ENCODE measurements at regions of chr2 and their contacts with region 1.

Region 1: DNA sequence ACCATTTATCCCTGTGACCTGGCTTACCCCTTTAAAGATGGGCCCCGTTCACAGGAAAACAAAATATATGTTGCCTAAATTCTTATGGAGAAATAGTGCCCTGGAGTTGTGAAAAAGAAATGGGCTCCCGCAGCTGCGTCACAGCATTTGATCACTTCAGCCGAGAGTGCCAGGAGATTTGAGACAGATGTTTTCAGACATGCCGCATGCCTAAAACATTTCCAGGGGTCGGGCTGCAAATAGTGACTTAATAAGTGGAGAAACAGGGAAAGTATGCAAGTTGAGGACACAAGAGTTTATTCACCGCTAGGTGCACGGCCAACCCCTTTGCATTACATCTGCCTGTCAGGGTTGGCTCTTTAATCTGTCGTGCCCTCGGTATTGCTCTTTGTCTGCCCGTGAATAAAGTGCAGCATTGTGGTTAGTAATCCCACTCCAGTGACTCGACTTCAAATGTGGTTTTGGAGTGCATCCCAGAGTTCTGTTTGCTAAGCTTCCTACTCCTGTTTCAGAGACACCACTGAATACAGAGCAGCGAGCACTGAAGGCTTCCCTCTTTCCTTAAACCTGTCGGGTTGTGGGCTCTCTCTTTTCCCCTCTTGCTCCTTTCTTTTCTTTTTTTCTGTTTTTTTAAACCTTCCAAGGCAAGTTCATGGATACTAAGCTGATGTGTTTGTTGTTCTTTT is 187.5 kb downstream of the LTBP1 start:
- DNase-seq: peak; percentile 54 to 70 (median 60)
- H3K4me3 ChIP-seq: peak overlapping the region; percentile 26
- H3K27ac ChIP-seq: peak overlapping the region; percentile 33 to 90
- H3K4me1 ChIP-seq: peaks cover 12% of the 10 kb centered on the region
- H3K27me3 ChIP-seq: no peaks in the 10 kb centered on the region
- CTCF ChIP-seq: no peak
- EP300 ChIP-seq: no peak
- POLR2A ChIP-seq: no peak

Region 2: DNA sequence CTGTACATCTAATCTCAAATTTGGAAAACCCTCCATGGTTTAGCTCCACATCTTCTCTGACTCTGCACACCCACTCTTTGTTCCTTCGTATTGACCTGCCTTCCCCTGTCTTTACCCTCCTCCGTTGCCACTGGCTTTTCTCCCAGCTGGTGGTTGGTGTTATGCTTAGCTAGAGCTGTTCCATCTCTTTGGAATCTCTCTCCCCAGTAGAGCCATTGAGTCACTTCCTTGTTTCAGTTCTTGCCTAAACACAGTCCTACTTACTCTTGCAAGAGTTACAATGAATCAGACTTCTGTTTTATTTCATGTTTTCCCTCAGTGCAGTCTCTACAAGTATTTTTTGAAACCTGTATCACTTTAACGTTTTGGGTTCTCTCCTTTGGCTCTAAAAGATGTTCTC is 76.4 kb after region 1 on chr2:
- intact Hi-C with region 1: loop called in 1 of 4 experiments (anchors 10 kb)
- DNase-seq: peak in 3 of 5 donors; percentile 27 to 61 (median 56)
- H3K4me3 ChIP-seq: no peak overlapping the region
- H3K27ac ChIP-seq: no peak overlapping the region
- H3K4me1 ChIP-seq: peaks cover 14% of the 10 kb centered on the region
- H3K27me3 ChIP-seq: no peaks in the 10 kb centered on the region
- CTCF ChIP-seq: no peak
- EP300 ChIP-seq: no peak
- POLR2A ChIP-seq: no peak

Measured in ovary (tissue), 10 donors.